Activated naive CD4-positive, alpha-beta T cell treated with anti-CD3 and anti-CD28 coated beads for 36 hours (primary cell): ENCODE measurements at regions of chr1 and their contacts with region 1.

Region 1: DNA sequence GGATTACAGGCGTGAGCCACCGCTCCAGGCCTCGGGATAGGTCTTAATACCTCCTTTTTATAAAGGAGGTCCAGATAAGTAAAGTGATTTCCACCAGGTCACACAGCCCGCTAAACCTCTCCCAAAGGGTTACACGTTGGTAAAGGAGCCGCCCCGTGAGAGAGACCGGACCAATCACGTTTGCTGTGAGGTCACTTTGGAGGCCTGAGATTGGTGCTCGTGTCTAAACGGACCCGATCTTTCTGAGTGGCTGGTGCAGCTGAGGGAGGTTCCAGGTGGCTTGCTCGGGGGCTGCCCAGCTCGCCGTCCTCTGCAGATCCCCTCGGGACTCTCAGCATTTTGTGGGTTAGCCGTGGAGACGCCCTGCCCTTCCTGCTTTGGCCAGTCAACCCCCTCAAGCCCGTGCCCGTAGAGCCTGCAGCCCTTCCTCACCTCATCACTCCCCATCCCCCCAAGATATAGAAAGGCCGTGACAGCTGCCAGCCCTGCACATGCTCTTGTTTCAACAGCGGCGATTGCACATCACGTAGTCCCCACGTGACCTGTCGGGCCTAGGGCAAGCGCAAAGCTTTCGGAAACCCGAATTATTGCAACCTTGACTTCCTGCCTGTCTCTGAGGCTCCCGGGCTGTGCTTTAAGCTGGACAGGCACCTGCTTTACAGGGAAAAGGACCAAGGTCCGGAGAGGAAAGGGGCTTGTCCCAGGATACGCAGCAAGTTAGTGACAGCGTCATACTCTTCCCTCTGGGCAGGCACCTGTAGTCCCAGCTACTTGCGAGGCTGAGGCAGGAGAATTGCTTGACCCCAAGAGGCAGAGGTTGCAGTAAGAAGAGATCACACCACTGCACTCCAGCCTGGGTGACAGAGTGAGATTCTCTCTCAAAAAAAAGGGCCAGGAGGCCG is 5.0 kb upstream of the COA7 start:
- DNase-seq: peak; percentile 89
- H3K4me3 Mint-ChIP-seq: peak overlapping the region; percentile 83
- H3K27ac Mint-ChIP-seq: peak overlapping the region; percentile 87
- H3K4me1 Mint-ChIP-seq: peaks cover 20% of the 10 kb centered on the region
- H3K27me3 Mint-ChIP-seq: no peaks in the 10 kb centered on the region

Region 2: DNA sequence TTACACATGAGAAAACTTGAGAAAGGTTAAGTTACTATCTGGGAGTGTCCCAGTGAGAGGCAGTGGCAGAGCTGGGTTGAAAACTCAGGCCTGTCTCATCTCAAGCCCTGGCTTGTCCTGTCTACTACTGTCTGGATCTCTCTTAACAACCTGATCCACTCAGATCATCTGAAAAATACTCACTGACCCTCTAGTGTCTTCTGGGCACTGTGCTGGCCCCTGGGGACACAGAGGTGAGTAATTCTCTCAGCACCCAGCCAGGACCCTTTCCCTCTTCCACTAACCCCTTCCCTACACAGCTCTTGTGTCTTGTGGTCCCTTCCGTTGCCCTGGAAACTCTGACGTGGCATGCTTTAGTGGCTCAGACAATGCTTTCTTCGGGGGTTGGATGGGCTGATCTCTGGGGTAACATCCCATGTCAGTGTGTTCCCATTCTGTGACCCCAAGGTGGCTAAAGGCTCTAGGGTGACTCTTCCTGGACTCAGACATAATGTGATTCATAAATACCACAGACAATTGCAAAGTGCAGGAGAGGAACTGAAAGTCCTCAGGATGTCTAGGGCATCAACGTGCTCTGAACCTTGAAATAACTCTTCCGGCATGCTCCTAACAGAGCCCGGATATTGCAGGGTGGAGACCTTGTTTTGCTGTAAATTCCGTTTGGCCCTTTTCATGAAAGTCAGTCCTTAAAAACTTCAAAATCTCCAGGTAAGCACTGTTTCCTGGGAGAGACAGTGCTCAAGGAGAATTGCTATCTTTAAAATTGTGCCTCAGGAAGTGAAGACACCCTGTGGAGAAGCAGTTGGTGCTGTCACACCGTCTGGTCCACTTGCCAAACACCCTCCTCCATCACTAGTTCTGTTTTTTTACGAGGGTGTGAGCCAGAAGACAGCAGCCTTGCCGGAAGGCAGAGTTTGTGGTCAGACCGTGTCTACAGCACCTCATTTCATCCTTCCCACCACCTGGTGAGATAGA is 66.1 kb before region 1 on chr1:
- CTCF ChIA-PET with region 1: no interaction called
- intact Hi-C with region 1: loop called (anchors 2 kb)
- DNase-seq: peak; percentile 84
- H3K4me3 Mint-ChIP-seq: peak overlapping the region; percentile 73
- H3K27ac Mint-ChIP-seq: peak overlapping the region; percentile 98
- H3K4me1 Mint-ChIP-seq: peaks cover 79% of the 10 kb centered on the region
- H3K27me3 Mint-ChIP-seq: no peaks in the 10 kb centered on the region

Region 3: GRCh38 chr1:52748119-52748518 is 45.0 kb after region 1 on chr1:
- CTCF ChIA-PET with region 1: interaction called, 6 read pairs
- intact Hi-C with region 1: loop called (anchors 1 kb)
- DNase-seq: no peak
- H3K4me3 Mint-ChIP-seq: no peak overlapping the region
- H3K27ac Mint-ChIP-seq: no peak overlapping the region
- H3K4me1 Mint-ChIP-seq: peaks cover 29% of the 10 kb centered on the region
- H3K27me3 Mint-ChIP-seq: no peaks in the 10 kb centered on the region

Region 4: DNA sequence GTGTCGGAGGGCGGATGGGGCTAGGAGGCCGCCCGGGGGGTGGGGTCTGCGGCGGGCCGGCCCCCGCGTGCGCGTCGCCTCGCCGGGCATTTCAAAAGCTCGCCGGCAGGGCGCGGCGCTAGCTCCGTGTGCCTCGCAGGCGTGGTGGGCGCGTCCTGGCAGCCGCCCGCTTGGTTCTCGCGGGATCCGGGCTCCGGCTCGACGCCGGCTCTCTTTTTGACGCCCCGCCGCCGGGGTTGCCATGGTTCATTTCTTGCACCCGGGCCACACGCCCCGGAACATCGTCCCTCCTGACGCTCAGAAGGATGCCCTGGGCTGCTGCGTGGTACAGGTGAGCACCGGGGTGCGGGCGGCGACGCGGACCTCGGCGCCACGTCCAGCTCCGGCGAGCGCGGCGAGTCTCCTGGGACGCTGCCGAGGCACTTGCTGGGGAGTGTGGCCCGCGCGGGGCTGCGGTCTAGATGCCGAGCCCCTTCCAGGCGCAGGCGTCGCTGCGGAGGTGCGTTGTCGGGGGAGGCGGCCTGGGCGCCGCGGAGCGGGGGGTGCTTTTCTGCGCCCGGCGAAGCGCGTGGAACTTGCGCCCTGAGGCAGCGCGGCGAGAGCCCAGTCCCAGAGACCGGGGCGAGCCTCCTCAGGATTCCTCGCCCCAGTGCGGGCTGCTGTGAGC is 139.6 kb after region 1 on chr1 and contains the start of gene ZYG11A:
- CTCF ChIA-PET with region 1: interaction called, 4 read pairs
- intact Hi-C with region 1: loop called (anchors 2 kb)
- DNase-seq: peak; percentile 81
- H3K4me3 Mint-ChIP-seq: peak within 1 kb of the TSS; percentile 65
- H3K27ac Mint-ChIP-seq: no peak within 1 kb of the TSS
- H3K4me1 Mint-ChIP-seq: peaks cover 1% of the 10 kb centered on the region
- H3K27me3 Mint-ChIP-seq: peaks cover 18% of the 10 kb centered on the region
- total RNA-seq, gene ZYG11A: 0.05 TPM

Region 5: DNA sequence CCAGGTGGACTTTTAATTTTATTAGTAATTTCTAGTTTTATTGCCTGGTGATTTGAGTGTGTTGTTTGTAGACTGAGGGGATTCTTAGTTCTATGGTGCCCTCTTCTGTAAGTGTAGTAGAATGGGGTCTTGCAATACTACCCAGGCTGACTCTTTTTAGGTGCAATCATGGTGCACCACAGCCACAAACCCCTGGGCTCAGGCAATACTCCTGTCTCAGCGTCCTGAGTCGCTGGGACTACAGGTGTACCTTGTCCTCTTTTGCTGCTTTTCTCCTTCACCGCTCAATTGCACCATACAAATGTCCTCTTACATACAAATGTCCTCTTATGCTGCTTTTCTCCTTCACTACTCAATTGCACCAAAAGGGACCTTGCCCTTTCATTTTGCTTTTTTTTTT is 267.0 kb after region 1 on chr1:
- CTCF ChIA-PET with region 1: no interaction called
- intact Hi-C with region 1: loop called (anchors 5 kb)
- DNase-seq: no peak
- H3K4me3 Mint-ChIP-seq: no peak overlapping the region
- H3K27ac Mint-ChIP-seq: no peak overlapping the region
- H3K4me1 Mint-ChIP-seq: no peaks in the 10 kb centered on the region
- H3K27me3 Mint-ChIP-seq: no peaks in the 10 kb centered on the region

Region 6: DNA sequence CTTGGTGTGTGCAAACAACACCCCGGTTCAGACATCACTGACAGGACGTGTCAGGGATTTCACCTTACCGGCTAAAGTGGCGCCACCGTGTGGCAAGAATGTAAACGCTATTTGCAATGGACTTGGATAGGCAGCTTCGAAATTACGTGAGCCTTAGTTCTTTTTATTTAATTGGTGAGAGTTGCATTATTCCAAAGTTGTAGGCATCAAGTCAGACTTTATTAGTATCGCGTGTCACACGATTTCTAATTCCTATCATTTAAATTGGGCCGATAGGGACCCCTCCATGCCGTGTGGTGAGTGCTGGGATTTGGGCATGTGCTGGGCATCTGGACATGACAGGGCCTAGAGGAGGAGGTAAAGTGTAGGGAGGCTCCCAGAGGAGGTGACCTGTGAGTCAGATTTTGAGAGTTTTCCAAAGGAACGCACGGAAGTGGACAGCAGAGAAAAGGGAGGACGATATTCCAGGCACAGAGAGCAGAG is 479.0 kb after region 1 on chr1:
- CTCF ChIA-PET with region 1: no interaction called
- intact Hi-C with region 1: loop called (anchors 1 kb)
- DNase-seq: peak; percentile 95
- H3K4me3 Mint-ChIP-seq: no peak overlapping the region
- H3K27ac Mint-ChIP-seq: no peak overlapping the region
- H3K4me1 Mint-ChIP-seq: no peaks in the 10 kb centered on the region
- H3K27me3 Mint-ChIP-seq: peaks cover 4% of the 10 kb centered on the region